ENCODE measurements at regions of chr11 and their contacts with region 1.

Region 1: DNA sequence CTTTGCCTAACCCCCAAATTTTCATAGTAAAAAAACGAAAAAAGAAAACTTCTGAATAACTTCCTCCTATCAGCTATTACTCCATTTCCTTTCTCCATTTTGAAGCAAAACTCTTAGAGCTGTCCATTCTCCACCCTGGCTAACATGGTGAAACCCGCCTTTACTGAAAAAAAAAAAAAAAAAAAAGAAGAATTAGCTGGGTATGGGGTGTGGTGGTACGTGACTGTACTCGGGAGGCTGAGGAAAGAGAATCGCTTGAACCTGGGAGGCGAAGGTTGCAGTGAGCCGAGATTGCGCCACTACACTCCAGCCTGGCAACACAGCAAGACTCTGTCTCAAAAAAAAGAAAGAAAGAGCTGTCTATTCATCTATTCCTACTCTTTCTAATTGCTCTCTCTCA is 11.3 kb upstream of the NXF1 start:
- DNase-seq: no peak
- ATAC-seq: no peak
- H3K4me3 ChIP-seq: no peak overlapping the region
- H3K27ac ChIP-seq: no peak overlapping the region
- H3K4me1 ChIP-seq: no peaks in the 10 kb centered on the region
- H3K27me3 ChIP-seq: no peaks in the 10 kb centered on the region
- CTCF ChIP-seq: no peak

Region 2: GRCh38 chr11:62359475-62359874 is 457.1 kb before region 1 on chr11:
- CTCF ChIA-PET with region 1: interaction called, 10 read pairs
- POLR2A ChIA-PET with region 1: no interaction called
- in situ Hi-C with region 1: no loop called
- intact Hi-C with region 1: no loop called
- DNase-seq: no peak
- ATAC-seq: no peak
- H3K4me3 ChIP-seq: no peak overlapping the region
- H3K27ac ChIP-seq: no peak overlapping the region
- H3K4me1 ChIP-seq: no peaks in the 10 kb centered on the region
- H3K27me3 ChIP-seq: no peaks in the 10 kb centered on the region
- CTCF ChIP-seq: no peak

Region 3: DNA sequence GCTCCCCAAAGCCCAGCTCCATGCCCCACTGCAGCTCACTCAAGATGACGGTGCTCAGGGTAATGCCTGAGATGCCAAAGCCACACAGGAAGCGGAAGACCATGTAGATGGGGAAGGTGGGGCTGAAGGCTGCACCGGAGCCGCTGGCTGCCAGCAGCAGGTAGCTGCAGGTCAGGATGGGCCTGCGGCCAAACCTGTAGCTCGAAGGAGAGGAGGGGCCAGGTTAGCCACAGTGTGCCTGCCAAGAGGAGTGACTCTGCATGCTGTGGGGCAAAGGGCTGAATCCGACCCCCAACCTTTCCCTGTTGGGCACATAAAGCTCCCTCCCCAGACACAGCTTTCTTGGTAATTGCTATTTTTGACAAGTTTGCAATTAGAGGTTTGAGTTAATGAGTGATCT is 183.1 kb after region 1 on chr11:
- CTCF ChIA-PET with region 1: no interaction called
- POLR2A ChIA-PET with region 1: no interaction called
- in situ Hi-C with region 1: no loop called
- intact Hi-C with region 1: no loop called
- DNase-seq: no peak
- ATAC-seq: no peak
- H3K4me3 ChIP-seq: no peak overlapping the region
- H3K27ac ChIP-seq: no peak overlapping the region
- H3K4me1 ChIP-seq: no peaks in the 10 kb centered on the region
- H3K27me3 ChIP-seq: no peaks in the 10 kb centered on the region
- CTCF ChIP-seq: no peak

Region 4: GRCh38 chr11:63012430-63012829 is 195.9 kb after region 1 on chr11:
- CTCF ChIA-PET with region 1: no interaction called
- POLR2A ChIA-PET with region 1: no interaction called
- in situ Hi-C with region 1: no loop called
- intact Hi-C with region 1: no loop called
- DNase-seq: no peak
- ATAC-seq: no peak
- H3K4me3 ChIP-seq: no peak overlapping the region
- H3K27ac ChIP-seq: no peak overlapping the region
- H3K4me1 ChIP-seq: peaks cover 4% of the 10 kb centered on the region
- H3K27me3 ChIP-seq: no peaks in the 10 kb centered on the region
- CTCF ChIP-seq: no peak

Measured in Panc1 (cell line).